A673 (cell line): ENCODE measurements at regions of chr13 and their contacts with region 1.

Region 1: DNA sequence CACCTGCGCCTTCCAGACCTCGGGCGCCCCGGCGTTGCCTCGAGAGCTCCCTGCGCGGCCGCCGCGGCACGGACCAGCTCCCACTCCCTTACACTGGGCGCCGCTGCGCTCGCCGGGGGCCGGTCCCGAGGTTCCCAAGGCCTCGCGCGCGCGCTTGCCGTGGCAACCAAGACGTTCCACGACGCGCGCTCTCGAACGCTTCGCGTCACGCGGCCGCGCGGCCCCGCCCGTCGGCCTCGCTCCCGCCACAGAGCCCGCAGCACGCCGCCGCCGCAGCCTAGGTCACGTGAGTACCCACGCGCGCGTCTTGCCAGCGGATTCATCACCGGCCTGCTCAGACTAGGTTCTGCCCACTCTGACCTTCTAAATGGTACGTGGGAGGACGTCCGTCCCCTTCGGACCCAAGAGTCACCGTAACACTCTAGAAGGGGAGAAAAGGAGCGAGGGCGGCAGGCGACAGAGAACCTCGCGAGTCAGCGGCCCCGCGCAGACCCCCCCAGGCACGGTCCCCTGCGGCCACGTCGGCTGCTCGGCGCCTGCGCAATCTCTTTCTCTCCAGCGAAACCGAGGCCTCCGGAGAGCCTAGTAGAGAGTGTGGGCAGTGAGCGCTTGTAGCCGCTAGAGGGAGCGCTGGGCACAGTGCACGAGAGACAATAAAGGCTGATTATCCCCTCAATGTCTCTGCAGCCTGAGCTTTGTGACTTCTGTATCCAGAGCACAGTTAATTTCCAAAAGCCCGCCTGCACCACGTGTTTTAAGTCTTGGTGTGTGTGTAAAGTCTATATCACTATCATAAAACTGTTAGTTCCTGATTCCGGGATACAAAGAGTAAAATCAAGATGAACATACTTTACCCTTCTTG is at the start of gene SPART:
- DNase-seq: peak; percentile 97
- H3K4me3 ChIP-seq: peak within 1 kb of the TSS; percentile 67
- H3K27ac ChIP-seq: peak within 1 kb of the TSS; percentile 98
- H3K4me1 ChIP-seq: peaks cover 26% of the 10 kb centered on the region
- H3K27me3 ChIP-seq: no peaks in the 10 kb centered on the region
- CTCF ChIP-seq: peak; percentile 99
- total RNA-seq, gene SPART: 169 and 182 TPM in 2 replicates

Region 2: DNA sequence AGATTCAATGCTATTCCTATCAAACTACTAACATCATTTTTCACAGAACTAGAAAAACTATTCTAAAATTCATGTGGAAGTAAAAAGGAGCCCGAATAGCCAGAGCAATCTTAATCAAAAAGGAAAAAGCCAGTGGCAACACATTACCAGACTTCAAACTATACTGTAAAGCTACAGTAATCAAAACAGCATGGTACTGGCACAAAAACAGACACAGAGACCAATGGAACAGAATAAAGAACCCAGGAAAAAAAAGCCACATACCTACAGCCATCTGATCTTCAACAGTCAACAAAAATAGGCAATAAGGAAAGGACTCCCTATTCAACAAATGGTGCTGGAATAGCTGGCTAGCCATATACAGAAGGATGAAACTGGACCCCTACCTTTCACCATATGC is 121.7 kb before region 1 on chr13:
- CTCF ChIA-PET with region 1: no interaction called
- POLR2A ChIA-PET with region 1: no interaction called
- intact Hi-C with region 1: no loop called
- DNase-seq: no peak
- H3K4me3 ChIP-seq: no peak overlapping the region
- H3K27ac ChIP-seq: no peak overlapping the region
- H3K4me1 ChIP-seq: no peaks in the 10 kb centered on the region
- H3K27me3 ChIP-seq: no peaks in the 10 kb centered on the region
- CTCF ChIP-seq: no peak

Region 3: GRCh38 chr13:36377826-36378468 is 31.5 kb after region 1 on chr13:
- CTCF ChIA-PET with region 1: interaction called, 12 read pairs
- POLR2A ChIA-PET with region 1: no interaction called
- intact Hi-C with region 1: no loop called
- DNase-seq: peak; percentile 79
- H3K4me3 ChIP-seq: no peak overlapping the region
- H3K27ac ChIP-seq: peak overlapping the region; percentile 68
- H3K4me1 ChIP-seq: peaks cover 13% of the 10 kb centered on the region
- H3K27me3 ChIP-seq: no peaks in the 10 kb centered on the region
- CTCF ChIP-seq: no peak

Region 4: DNA sequence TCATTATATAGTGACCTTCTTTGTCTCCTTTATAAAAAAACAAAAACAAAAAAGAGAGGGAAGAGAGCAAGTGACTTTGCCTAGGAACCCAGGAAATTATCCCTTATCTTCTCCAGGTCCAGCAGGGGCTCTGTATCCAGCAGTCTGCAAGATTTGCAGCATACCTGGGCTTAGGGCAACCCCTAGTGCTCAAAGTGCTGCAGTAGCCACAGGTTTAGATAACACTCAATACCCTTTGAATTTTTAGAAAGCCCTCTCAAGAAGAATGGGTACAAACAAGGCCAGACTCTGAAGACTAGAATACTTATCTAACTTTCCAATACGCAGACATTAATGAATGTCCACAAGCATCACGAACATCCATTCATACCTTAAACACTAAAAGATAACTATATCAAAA is 129.0 kb after region 1 on chr13:
- CTCF ChIA-PET with region 1: no interaction called
- POLR2A ChIA-PET with region 1: no interaction called
- intact Hi-C with region 1: loop called (anchors 1 kb)
- DNase-seq: peak; percentile 84
- H3K4me3 ChIP-seq: no peak overlapping the region
- H3K27ac ChIP-seq: no peak overlapping the region
- H3K4me1 ChIP-seq: peaks cover 12% of the 10 kb centered on the region
- H3K27me3 ChIP-seq: no peaks in the 10 kb centered on the region
- CTCF ChIP-seq: peak; percentile 68

Region 5: DNA sequence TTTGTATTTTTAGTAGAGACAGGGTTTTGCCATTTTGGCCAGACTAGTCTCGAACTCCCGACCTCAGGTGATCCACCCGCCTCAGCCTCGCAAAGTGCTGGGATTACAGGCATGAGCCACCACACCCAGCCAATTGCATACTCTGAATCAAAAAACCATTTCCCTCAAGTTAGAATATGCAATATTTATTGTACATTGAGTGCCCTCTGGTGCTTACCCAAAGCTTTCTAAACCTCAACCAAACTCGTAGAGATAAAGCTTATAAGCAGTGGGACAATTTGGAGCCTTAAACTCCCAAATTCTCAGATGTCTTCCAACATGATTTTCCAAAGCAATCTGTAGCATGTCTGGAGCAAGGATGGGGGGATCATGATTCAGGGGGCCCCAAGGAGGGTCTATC is 494.9 kb after region 1 on chr13:
- CTCF ChIA-PET with region 1: no interaction called
- POLR2A ChIA-PET with region 1: no interaction called
- intact Hi-C with region 1: loop called (anchors 2 kb)
- DNase-seq: peak; percentile 85
- H3K4me3 ChIP-seq: no peak overlapping the region
- H3K27ac ChIP-seq: peak overlapping the region; percentile 82
- H3K4me1 ChIP-seq: peaks cover 61% of the 10 kb centered on the region
- H3K27me3 ChIP-seq: no peaks in the 10 kb centered on the region
- CTCF ChIP-seq: peak; percentile 48